ENCODE measurements at regions of chr4 and their contacts with region 1.

Region 1: GRCh38 chr4:445410-445809 is 53.5 kb downstream of the ZNF721 start:
- DNase-seq: no peak
- ATAC-seq: no peak
- H3K4me3 ChIP-seq: no peak overlapping the region
- H3K4me3 Mint-ChIP-seq: no peak overlapping the region
- H3K27ac ChIP-seq: no peak overlapping the region
- H3K27ac Mint-ChIP-seq: no peak overlapping the region
- H3K4me1 ChIP-seq: no peaks in the 10 kb centered on the region
- H3K4me1 Mint-ChIP-seq: no peaks in the 10 kb centered on the region
- H3K27me3 ChIP-seq: no peaks in the 10 kb centered on the region
- H3K27me3 Mint-ChIP-seq: no peaks in the 10 kb centered on the region
- CTCF ChIP-seq: no peak

Region 2: GRCh38 chr4:373062-373839 is 72.2 kb before region 1 on chr4:
- CTCF ChIA-PET with region 1: no interaction called
- POLR2A ChIA-PET with region 1: no interaction called
- intact Hi-C with region 1: loop called (anchors 5 kb)
- DNase-seq: no peak
- ATAC-seq: no peak
- H3K4me3 ChIP-seq: peak overlapping the region in 1 of 2 experiments; percentile 1
- H3K4me3 Mint-ChIP-seq: no peak overlapping the region
- H3K27ac ChIP-seq: no peak overlapping the region
- H3K27ac Mint-ChIP-seq: no peak overlapping the region
- H3K4me1 ChIP-seq: no peaks in the 10 kb centered on the region
- H3K4me1 Mint-ChIP-seq: no peaks in the 10 kb centered on the region
- H3K27me3 ChIP-seq: no peaks in the 10 kb centered on the region
- H3K27me3 Mint-ChIP-seq: no peaks in the 10 kb centered on the region
- CTCF ChIP-seq: no peak

Region 3: DNA sequence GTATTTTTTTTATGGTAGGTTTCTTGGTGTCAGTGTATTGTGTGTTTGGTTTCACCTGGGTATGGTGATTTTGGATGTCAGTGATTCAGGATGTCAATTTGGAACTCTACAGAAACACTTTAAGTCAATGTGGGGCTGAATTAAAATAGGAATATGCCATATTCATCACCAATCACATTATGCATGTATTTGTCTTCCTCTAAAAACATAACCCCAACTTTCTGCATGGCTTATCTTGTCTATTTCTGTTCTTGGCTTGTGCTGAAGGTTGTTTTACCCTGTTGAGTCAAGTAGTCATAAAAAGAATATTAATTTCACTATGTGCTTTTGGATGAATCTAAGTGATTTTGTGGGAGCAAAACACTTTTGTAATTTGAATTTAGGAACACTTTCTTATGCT is 34.6 kb after region 1 on chr4:
- CTCF ChIA-PET with region 1: no interaction called
- POLR2A ChIA-PET with region 1: no interaction called
- intact Hi-C with region 1: loop called in 1 of 2 experiments (anchors 5 kb)
- DNase-seq: no peak
- ATAC-seq: no peak
- H3K4me3 ChIP-seq: no peak overlapping the region
- H3K4me3 Mint-ChIP-seq: no peak overlapping the region
- H3K27ac ChIP-seq: no peak overlapping the region
- H3K27ac Mint-ChIP-seq: no peak overlapping the region
- H3K4me1 ChIP-seq: peaks cover 11% of the 10 kb centered on the region
- H3K4me1 Mint-ChIP-seq: peaks cover 11% of the 10 kb centered on the region
- H3K27me3 ChIP-seq: no peaks in the 10 kb centered on the region
- H3K27me3 Mint-ChIP-seq: no peaks in the 10 kb centered on the region
- CTCF ChIP-seq: no peak